Endothelial cell of umbilical vein (primary cell): ENCODE measurements at regions of chr5 and their contacts with region 1.

Region 1: DNA sequence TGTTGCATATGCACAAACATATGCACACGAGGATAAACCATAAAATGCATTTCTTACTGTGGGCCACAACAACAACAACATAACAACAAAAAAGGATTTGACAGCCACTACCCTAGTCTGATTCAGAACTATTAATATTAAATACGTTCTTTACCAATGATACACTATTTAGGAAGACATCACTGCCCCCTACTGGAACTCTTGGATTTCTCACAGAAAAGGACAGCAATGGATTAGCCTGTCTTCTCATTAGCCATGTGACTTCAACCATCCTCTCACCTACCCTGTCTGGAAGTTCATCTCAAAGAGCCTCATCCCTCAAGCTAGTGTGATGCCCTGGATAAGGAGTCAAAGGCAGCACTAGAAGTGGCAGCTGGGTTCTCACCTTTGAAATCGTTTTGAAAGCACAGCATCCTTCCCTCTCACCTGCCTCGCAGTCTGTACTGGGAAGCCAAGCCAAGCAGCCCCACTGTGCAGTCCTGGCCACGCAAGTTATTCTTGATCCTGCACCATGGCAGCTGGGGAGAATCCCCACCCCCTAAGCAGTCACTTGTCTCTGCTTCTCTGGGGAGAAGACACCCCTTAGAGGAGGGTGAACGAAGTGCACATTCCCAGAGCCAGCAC is 64.6 kb downstream of the SH3TC2 start:
- DNase-seq: peak; percentile 68
- H3K4me3 ChIP-seq: no peak overlapping the region
- H3K27ac ChIP-seq: no peak overlapping the region
- H3K4me1 ChIP-seq: peaks cover 13% of the 10 kb centered on the region
- H3K27me3 ChIP-seq: no peaks in the 10 kb centered on the region
- CTCF ChIP-seq: peak; percentile 54 to 62
- POLR2A ChIP-seq: no peak

Region 2: GRCh38 chr5:148746826-148747535 is 251.3 kb before region 1 on chr5:
- CTCF ChIA-PET with region 1: interaction called, 63 read pairs
- POLR2A ChIA-PET with region 1: no interaction called
- dilution Hi-C with region 1: loop called (anchors 10 kb)
- intact Hi-C with region 1: no loop called
- DNase-seq: peak; percentile 45
- H3K4me3 ChIP-seq: no peak overlapping the region
- H3K27ac ChIP-seq: no peak overlapping the region
- H3K4me1 ChIP-seq: no peaks in the 10 kb centered on the region
- H3K27me3 ChIP-seq: no peaks in the 10 kb centered on the region
- CTCF ChIP-seq: no peak
- POLR2A ChIP-seq: no peak

Region 3: GRCh38 chr5:148805326-148806290 is 192.7 kb before region 1 on chr5:
- CTCF ChIA-PET with region 1: interaction called, 4 read pairs
- POLR2A ChIA-PET with region 1: no interaction called
- dilution Hi-C with region 1: no loop called
- intact Hi-C with region 1: loop called (anchors 5 kb)
- DNase-seq: peak; percentile 77
- H3K4me3 ChIP-seq: no peak overlapping the region
- H3K27ac ChIP-seq: peak overlapping the region; percentile 10
- H3K4me1 ChIP-seq: peaks cover 35% of the 10 kb centered on the region
- H3K27me3 ChIP-seq: no peaks in the 10 kb centered on the region
- CTCF ChIP-seq: no peak
- POLR2A ChIP-seq: no peak

Region 4: GRCh38 chr5:148820461-148821395 is 177.6 kb before region 1 on chr5:
- CTCF ChIA-PET with region 1: interaction called, 36 read pairs
- POLR2A ChIA-PET with region 1: no interaction called
- dilution Hi-C with region 1: no loop called
- intact Hi-C with region 1: loop called (anchors 1 kb)
- DNase-seq: peak; percentile 45
- H3K4me3 ChIP-seq: no peak overlapping the region
- H3K27ac ChIP-seq: no peak overlapping the region
- H3K4me1 ChIP-seq: peaks cover 6% of the 10 kb centered on the region
- H3K27me3 ChIP-seq: no peaks in the 10 kb centered on the region
- CTCF ChIP-seq: peak; percentile 57 to 68
- POLR2A ChIP-seq: no peak

Region 5: GRCh38 chr5:148979104-148979723 is 19.1 kb before region 1 on chr5:
- CTCF ChIA-PET with region 1: interaction called, 14 read pairs
- POLR2A ChIA-PET with region 1: no interaction called
- dilution Hi-C with region 1: no loop called
- intact Hi-C with region 1: no loop called
- DNase-seq: no peak
- H3K4me3 ChIP-seq: no peak overlapping the region
- H3K27ac ChIP-seq: no peak overlapping the region
- H3K4me1 ChIP-seq: peaks cover 28% of the 10 kb centered on the region
- H3K27me3 ChIP-seq: no peaks in the 10 kb centered on the region
- CTCF ChIP-seq: no peak
- POLR2A ChIP-seq: no peak